Left cardiac atrium (tissue), 4 donors: ENCODE measurements at regions of chr1 and their contacts with region 1.

Region 1: DNA sequence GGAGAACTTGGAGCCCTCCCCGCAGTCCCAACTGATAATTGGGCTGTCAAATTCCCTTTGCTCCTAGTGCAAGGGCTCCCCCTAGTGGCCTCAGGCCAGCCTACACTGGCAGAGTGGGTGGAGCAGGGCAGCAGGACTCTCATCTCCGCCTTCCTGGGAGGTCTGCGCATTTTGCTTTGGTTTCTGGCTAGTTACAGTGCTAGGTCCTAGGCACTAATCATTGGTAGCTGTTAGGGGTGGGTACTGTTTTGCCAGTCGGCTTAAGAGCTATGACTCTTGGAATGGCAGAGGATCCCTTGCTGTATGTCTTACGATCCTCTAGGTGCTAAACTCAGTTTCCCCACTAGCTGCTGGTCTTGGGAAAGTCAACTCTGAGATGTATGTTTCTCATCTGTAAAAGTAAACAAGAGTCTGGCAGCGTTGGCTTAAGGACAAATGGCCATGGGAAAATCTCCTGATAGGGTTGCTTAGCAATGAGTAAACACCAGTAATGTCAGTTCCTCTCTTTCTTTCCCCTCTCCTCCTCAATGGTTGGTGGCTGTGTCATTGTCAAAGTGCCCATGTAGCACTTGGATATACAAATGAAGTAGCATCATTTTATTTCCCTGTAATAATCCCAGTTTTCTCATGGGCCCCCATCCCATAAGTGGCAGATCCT is 2.1 kb upstream of the FYB2 start:
- DNase-seq: peak; percentile 85
- ATAC-seq: peak; percentile 83 to 84

Region 2: DNA sequence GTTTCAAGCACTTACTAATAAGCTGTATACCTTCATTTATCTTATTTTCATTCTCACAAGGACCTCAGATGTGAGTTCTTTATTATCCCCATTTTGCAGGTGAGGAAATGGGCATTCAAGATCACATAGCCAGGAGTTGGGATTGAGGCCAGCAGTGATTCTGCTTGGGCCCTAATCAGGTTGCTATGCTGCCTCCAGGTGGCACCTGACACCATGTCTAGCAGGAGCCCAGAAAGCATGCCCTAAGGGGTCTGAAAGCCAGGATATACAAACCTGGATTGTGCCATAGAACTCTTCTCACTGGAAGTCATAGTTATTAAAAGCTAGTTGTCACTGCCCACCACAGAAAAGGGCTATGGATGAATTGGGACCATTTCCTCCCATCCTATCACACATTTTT is 63.1 kb before region 1 on chr1:
- intact Hi-C with region 1: loop called in 1 of 2 experiments (anchors 5 kb)
- DNase-seq: peak; percentile 27
- ATAC-seq: peak; percentile 66 to 71

Region 3: GRCh38 chr1:56774067-56774609 is 47.1 kb before region 1 on chr1:
- intact Hi-C with region 1: no loop called
- DNase-seq: no peak
- ATAC-seq: no peak